ENCODE measurements at regions of chr9 and their contacts with region 1.

Region 1: GRCh38 chr9:129610473-129611301 is 10.2 kb downstream of the C9orf50 start:
- DNase-seq: peak; percentile 81 to 94 (median 93)
- ATAC-seq: peak; percentile 33 to 61
- H3K4me3 ChIP-seq: peak overlapping the region; percentile 66
- H3K27ac ChIP-seq: peak overlapping the region; percentile 78
- H3K4me1 ChIP-seq: peaks cover 3% of the 10 kb centered on the region
- H3K27me3 ChIP-seq: no peaks in the 10 kb centered on the region

Region 2: DNA sequence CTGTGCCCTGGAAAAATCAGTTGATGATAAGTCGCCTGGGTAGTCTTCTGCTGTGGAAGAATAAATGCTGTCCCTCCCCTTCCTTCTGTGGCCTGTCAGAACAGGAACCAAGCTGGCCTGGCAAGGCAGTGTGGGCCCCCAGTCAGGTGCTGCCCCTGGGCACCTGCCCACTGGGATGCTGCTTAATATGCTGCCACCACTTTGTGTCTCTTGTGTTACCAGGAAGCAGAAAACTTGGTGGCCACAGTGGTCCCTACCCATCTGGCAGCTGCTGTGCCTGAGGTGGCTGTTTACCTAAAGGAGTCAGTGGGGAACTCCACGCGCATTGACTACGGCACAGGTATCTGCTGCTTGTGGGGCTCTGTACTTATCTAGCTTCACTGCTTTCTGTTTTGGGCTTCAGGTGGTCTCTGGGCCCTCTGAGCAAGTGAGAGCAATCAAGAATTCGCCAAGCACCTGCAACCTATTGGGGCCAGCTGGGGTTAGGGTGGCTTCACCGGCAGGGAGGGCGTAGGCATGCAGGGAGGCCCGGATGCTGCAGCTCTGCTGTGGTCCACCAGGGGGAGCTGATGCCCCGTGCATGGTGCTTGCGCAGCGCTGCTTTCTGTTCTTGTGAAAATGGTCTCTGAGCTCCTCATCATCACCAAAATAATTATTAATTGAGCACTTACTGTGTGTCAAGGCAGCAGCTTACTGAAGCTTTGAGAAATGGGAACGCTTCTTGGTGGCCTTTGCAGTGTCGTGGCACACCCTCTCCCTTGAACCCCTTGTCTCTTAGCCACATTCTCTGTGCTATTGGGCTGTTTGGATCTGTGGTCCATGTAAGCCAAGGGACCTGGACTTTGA is 479.2 kb before region 1 on chr9:
- intact Hi-C with region 1: loop called in 1 of 4 experiments (anchors 5 kb)
- DNase-seq: peak; percentile 78 to 93 (median 91)
- ATAC-seq: peak; percentile 84 to 86
- H3K4me3 ChIP-seq: no peak overlapping the region
- H3K27ac ChIP-seq: no peak overlapping the region
- H3K4me1 ChIP-seq: no peaks in the 10 kb centered on the region
- H3K27me3 ChIP-seq: no peaks in the 10 kb centered on the region

Region 3: DNA sequence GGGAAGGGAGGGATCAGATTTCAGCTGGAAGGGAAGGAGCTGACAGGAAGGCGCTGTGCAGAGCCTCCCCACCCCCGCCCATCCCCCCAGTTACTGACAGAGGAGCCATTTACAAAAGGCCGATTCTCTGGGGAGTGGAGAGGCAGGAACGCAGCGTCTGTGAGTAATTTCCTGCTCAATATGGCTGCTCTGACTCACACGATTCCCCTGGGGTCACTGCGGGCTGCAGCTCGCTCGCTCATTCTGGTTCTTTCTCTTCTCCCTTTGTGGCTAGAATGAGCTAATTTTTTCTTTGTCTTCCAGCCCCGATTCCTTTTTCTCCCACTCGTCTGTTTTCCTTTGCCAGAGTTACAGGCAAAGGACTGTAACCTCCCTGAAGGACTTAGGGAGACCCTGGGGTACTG is 470.7 kb before region 1 on chr9:
- intact Hi-C with region 1: loop called in 3 of 4 experiments (anchors 2 kb)
- DNase-seq: peak; percentile 94 to 96 (median 95)
- ATAC-seq: peak; percentile 79 to 81
- H3K4me3 ChIP-seq: peak overlapping the region; percentile 3
- H3K27ac ChIP-seq: peak overlapping the region; percentile 96
- H3K4me1 ChIP-seq: peaks cover 26% of the 10 kb centered on the region
- H3K27me3 ChIP-seq: no peaks in the 10 kb centered on the region

Region 4: DNA sequence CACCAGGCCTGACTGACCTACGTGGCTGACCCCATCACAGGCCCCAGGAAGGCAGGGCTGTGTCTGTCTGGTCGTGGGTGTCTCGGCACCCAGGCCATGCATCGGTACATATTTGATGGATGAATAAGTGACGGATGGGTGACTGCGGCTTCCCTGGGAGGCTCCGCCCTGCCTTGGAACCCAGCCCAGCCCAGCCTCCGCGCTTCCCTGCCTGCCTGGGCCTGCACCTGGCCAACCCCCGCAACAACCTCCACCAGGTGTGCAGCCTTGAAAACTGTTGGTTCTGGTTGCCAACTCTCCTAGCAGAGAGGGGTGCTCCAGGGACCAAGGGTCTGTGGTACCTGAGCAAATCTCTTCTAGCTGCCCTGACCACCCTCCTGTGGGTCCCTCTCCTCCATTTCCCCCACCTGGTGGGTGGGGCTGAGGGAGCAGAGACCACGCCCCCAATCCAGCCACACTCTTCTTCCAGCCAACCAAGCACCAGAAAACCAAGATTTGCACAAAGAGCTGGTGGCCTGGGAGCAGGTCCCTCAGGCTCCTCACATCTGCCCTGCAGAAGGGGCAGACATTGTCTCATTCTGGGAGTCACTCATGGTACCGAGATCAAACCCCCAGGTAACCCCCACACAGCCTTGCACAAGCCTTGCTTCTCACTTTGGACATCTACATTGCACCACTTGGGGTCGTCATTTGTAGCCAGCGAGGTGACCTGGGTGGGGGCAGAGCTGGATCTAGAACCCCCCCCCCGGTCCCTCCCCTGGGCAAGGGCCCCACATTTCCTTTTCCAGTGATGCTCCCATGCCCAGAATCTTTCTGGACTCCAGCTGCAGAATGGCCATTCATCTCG is 332.1 kb before region 1 on chr9:
- intact Hi-C with region 1: no loop called
- DNase-seq: no peak
- ATAC-seq: no peak
- H3K4me3 ChIP-seq: no peak overlapping the region
- H3K27ac ChIP-seq: no peak overlapping the region
- H3K4me1 ChIP-seq: peaks cover 2% of the 10 kb centered on the region
- H3K27me3 ChIP-seq: no peaks in the 10 kb centered on the region

Region 5: DNA sequence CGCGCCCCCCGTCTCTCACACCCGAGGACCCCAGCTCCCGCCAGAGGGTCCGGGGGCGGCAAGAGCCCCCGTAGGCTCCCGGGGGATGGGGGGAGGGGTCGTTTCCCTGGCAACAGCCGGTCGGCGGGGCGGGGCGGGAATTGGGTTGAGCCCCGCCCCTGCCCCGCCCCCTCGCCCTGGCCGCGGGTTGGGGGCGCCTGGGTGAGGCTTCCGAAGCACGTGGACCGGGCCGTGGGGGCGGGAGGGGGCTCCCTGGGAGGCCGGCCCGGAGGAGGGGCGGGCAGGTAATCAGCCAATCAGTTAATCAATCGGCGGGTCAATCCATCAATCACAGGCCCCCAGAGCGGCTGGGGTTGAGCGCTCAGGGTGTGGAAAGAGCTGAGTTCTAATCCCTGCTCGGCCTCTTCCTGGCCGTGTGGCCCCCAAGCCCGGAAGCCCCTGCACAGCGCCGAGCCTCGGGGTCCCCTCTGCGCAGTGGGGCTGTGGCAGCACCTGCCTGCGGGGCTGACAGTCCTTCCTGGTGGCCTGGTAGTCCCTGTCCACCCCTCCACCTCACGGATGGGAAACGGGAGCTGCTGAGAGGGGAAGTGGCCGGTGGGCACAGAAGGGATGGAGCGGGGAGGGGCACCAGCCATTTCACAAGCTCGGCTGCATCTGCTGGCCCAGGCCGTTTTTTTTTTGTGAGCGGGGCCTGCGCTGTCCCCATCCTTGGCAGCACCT is 258.4 kb before region 1 on chr9:
- intact Hi-C with region 1: loop called in 1 of 4 experiments (anchors 10 kb)
- DNase-seq: peak in 2 of 3 donors; percentile 78 to 82
- ATAC-seq: peak; percentile 35 to 37
- H3K4me3 ChIP-seq: peak overlapping the region; percentile 30
- H3K27ac ChIP-seq: peak overlapping the region; percentile 11
- H3K4me1 ChIP-seq: peaks cover 2% of the 10 kb centered on the region
- H3K27me3 ChIP-seq: no peaks in the 10 kb centered on the region

Region 6: GRCh38 chr9:129569502-129570449 is 40.9 kb before region 1 on chr9:
- intact Hi-C with region 1: no loop called
- DNase-seq: peak in 1 of 3 donors; percentile 61
- ATAC-seq: peak; percentile 12 to 25
- H3K4me3 ChIP-seq: no peak overlapping the region
- H3K27ac ChIP-seq: peak overlapping the region; percentile 48
- H3K4me1 ChIP-seq: peaks cover 8% of the 10 kb centered on the region
- H3K27me3 ChIP-seq: no peaks in the 10 kb centered on the region